ENCODE measurements at regions of chr1 and their contacts with region 1.

Region 1: GRCh38 chr1:151251656-151252470 is 2.7 kb upstream of the PSMD4 start:
- DNase-seq: no peak
- H3K4me3 ChIP-seq: no peak overlapping the region
- H3K27ac ChIP-seq: no peak overlapping the region
- H3K4me1 ChIP-seq: peaks cover 14 to 27% (median 21%) of the 10 kb centered on the region in 4 donors
- H3K27me3 ChIP-seq: no peaks in the 10 kb centered on the region
- CTCF ChIP-seq: peak; percentile 82 to 88 (median 86)
- EP300 ChIP-seq: no peak
- POLR2A ChIP-seq: no peak

Region 2: DNA sequence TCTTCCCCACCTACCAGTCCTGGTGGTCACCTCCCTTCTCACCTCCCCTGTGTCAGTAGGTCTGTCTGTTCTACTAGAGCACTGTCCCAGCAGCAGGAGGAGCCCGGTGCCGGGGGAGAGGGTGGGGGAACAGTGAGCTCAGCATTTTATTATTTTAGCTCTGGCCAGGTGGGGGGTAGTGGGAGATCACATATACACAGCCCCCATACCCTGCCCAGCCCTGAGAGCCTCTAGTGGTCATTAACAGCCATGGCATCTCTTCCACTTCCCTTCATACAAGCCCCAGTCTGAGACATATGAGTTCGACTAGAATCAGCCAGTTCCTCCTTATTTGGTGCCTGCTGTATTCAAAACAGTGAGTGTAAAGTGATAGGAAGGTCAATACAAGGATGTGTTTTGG is 76.0 kb before region 1 on chr1 and contains the start of gene TMOD4:
- intact Hi-C with region 1: no loop called
- DNase-seq: no peak
- H3K4me3 ChIP-seq: no peak within 1 kb of the TSS
- H3K27ac ChIP-seq: peak within 1 kb of the TSS; percentile 70 to 75 (median 72)
- H3K4me1 ChIP-seq: peaks cover 9 to 25% (median 22%) of the 10 kb centered on the region in 4 donors
- H3K27me3 ChIP-seq: no peaks in the 10 kb centered on the region
- CTCF ChIP-seq: peak; percentile 27 to 65 (median 30)
- EP300 ChIP-seq: no peak
- POLR2A ChIP-seq: no peak
- total RNA-seq, gene TMOD4: 1.5 to 1.6 TPM in 2 of 4 donors, not detected in the others

Region 3: GRCh38 chr1:151196292-151196800 is 55.5 kb before region 1 on chr1:
- intact Hi-C with region 1: loop called (anchors 2 kb)
- DNase-seq: no peak
- H3K4me3 ChIP-seq: peak overlapping the region; percentile 24 to 39 (median 30)
- H3K27ac ChIP-seq: peak overlapping the region; percentile 69 to 96 (median 86)
- H3K4me1 ChIP-seq: peaks cover 30 to 49% (median 42%) of the 10 kb centered on the region in 4 donors
- H3K27me3 ChIP-seq: no peaks in the 10 kb centered on the region
- CTCF ChIP-seq: peak; percentile 58 to 76 (median 62)
- EP300 ChIP-seq: no peak
- POLR2A ChIP-seq: no peak

Region 4: DNA sequence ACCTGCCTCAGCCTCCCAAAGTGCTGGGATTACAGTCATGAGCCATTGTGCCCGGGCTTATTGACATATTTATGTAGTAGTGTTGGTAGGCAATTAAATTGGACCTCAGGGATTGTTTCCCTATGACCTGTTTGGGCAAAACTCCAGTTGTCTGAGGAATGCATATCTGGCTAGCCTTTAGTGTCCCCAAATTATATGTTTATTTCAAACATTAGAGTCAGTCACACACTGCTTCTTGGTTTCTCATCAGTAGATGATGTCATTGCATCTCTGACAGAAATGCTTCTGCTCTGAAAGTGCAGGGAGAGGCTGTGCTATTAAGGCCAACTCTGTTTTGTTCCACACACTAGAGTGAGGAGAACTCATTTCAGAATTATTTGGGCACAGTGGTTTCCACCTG is 41.0 kb before region 1 on chr1:
- intact Hi-C with region 1: no loop called
- DNase-seq: no peak
- H3K4me3 ChIP-seq: no peak overlapping the region
- H3K27ac ChIP-seq: peak overlapping the region; percentile 21 to 63 (median 58)
- H3K4me1 ChIP-seq: peaks cover 19 to 64% (median 60%) of the 10 kb centered on the region in 4 donors
- H3K27me3 ChIP-seq: no peaks in the 10 kb centered on the region
- CTCF ChIP-seq: no peak
- EP300 ChIP-seq: no peak
- POLR2A ChIP-seq: no peak